ENCODE measurements at regions of chr15 and their contacts with region 1.

Region 1: DNA sequence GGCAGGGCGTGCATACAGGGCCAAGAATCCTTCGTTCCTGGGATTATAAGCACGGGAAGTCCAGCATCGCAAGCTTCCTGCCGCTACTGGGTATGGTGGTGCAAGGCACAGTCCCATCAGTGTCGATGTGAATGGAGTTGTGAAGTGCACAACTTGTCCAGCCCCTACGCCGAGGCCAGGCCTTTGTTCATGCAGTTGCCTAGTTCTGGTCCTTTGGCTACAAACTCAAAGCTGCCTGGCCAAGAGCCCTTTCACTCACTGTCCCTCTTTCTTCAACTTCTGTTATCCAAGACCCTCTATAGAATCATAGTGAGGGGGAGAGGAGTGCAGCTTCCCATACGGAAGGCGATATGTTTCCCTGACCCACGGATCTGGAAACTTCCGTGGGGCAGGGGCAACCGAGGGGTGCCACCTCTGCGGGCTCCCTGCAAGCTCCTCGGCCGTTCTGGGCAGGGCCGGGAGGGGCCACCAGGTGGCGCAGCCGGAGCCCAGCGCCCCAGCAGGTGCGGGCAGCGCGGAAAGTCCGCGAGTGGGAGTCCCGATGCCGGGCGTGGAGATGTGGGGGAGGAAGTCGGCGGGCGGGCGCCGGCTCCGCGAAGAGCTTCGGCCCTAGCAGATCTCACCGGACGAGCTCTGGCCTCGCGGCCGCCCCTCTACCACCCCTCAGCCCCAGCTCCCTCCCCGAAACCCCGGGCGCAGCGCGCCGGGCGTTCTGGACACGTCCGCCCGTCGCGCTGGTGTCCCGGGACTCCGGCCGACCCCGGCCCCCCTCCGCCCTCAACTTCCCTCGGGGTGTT is 693 bp downstream of the RASGRP1 start:
- DNase-seq: peak; percentile 86
- H3K4me3 Mint-ChIP-seq: peak overlapping the region; percentile 98
- H3K27ac Mint-ChIP-seq: peak overlapping the region; percentile 95
- H3K4me1 Mint-ChIP-seq: peaks cover 57% of the 10 kb centered on the region
- H3K27me3 Mint-ChIP-seq: no peaks in the 10 kb centered on the region

Region 2: DNA sequence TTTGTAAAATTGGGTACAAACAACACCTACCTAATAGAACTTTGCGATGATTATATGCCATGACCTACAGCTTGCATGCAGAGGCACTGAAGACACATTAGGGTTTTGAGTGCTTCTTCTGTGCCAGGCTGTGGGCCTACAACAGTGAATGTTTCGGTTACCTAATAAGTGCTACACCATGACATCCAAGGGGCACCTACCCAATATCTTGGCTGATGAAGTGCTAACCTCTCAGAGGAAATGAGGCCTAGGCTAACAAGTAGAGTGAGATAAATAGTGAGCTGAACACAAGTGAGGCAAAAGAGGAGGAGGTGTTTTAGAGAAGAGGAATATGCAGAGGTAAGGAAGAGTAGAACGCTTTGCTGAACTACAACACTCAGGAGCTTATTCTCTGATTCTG is 12.9 kb after region 1 on chr15:
- CTCF ChIA-PET with region 1: interaction called, 18 read pairs
- POLR2A ChIA-PET with region 1: no interaction called
- DNase-seq: no peak
- H3K4me3 Mint-ChIP-seq: no peak overlapping the region
- H3K27ac Mint-ChIP-seq: peak overlapping the region; percentile 44
- H3K4me1 Mint-ChIP-seq: peaks cover 22% of the 10 kb centered on the region
- H3K27me3 Mint-ChIP-seq: peaks cover 2% of the 10 kb centered on the region

Region 3: DNA sequence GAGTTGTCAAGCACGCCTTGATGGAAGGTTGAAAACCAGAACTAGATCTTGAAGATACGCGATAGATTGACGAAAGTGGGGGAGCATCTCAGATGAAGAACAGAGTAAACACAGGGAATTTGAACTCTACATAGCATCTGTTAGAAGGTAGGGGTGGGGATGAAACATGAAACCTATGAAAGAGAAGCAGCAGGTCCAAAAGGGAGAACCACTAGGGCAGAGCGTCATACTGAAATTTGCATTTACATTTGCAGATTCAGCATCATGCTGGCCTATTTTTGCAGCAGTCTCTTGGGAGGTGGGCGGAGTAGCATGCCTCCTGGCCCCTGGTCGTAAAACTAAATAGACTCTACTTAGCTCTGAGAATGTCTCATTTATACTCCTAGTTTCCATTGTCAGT is 46.8 kb after region 1 on chr15:
- CTCF ChIA-PET with region 1: interaction called, 33 read pairs
- POLR2A ChIA-PET with region 1: interaction called, 19 read pairs
- DNase-seq: peak; percentile 53
- H3K4me3 Mint-ChIP-seq: peak overlapping the region; percentile 67
- H3K27ac Mint-ChIP-seq: peak overlapping the region; percentile 96
- H3K4me1 Mint-ChIP-seq: peaks cover 68% of the 10 kb centered on the region
- H3K27me3 Mint-ChIP-seq: no peaks in the 10 kb centered on the region

Region 4: DNA sequence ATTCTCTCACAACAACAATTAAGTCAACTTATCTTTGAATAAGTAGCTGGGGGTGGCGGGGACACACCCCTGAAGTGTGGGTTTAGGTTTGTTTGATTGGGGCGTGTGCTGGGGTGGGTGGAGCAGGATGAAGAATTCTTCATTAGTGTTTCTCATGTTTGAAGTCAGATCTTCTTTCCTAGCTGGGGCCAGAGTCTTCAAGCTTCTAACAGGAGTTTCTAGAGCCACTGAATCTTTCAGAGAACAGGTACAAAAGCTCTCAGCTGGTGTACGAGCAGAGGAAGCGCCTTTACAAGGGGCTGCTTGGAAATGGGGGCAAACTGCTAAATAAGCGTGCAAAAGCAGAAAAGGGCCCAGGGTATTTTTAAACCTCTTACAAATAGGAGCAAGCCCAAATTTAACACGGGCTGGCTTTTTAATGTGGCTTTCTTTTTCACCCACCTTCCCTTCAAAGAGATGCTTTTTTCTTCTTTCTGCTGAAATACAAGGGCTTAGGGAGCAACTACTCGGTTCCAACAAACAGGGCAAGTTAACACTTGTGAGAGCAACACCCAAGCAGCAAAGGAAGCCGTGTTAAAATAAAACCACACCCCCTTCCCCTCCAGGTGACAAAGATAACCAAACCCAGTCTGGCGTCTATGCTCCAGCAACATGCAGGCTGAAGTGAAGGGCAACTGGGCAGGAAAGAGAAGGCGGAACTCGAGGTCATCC is 87.6 kb after region 1 on chr15:
- CTCF ChIA-PET with region 1: interaction called, 58 read pairs
- POLR2A ChIA-PET with region 1: interaction called, 13 read pairs
- DNase-seq: peak; percentile 81
- H3K4me3 Mint-ChIP-seq: peak overlapping the region; percentile 77
- H3K27ac Mint-ChIP-seq: peak overlapping the region; percentile 97
- H3K4me1 Mint-ChIP-seq: peaks cover 89% of the 10 kb centered on the region
- H3K27me3 Mint-ChIP-seq: no peaks in the 10 kb centered on the region

Region 5: GRCh38 chr15:38683382-38684242 is 119.7 kb after region 1 on chr15:
- CTCF ChIA-PET with region 1: interaction called, 194 read pairs
- POLR2A ChIA-PET with region 1: interaction called, 20 read pairs
- DNase-seq: peak; percentile 82
- H3K4me3 Mint-ChIP-seq: peak overlapping the region; percentile 55
- H3K27ac Mint-ChIP-seq: peak overlapping the region; percentile 95
- H3K4me1 Mint-ChIP-seq: peaks cover 81% of the 10 kb centered on the region
- H3K27me3 Mint-ChIP-seq: no peaks in the 10 kb centered on the region

Measured in activated CD4-positive, alpha-beta T cell treated with anti-CD3 and anti-CD28 coated beads, Interleukin-2, amount 10 ng/mL, durations not matched to agents 7 days and 5 days (primary cell).